Heart left ventricle (tissue), 16 donors: ENCODE measurements at regions of chr5 and their contacts with region 1.

Region 1: GRCh38 chr5:123671042-123671441 is 159.1 kb downstream of the CSNK1G3 start:
- DNase-seq: peak in 4 of 5 donors; percentile 28 to 37 (median 31)
- ATAC-seq: peak in 1 of 4 donors; percentile 25
- H3K4me3 ChIP-seq: no peak overlapping the region
- H3K27ac ChIP-seq: no peak overlapping the region
- H3K4me1 ChIP-seq: peaks cover 0 to 26% (median 11%) of the 10 kb centered on the region in 12 donors
- H3K27me3 ChIP-seq: no peaks in the 10 kb centered on the region
- CTCF ChIP-seq: peak; percentile 73 to 93 (median 83)
- POLR2A ChIP-seq: no peak

Region 2: GRCh38 chr5:123628860-123629556 is 42.0 kb before region 1 on chr5:
- intact Hi-C with region 1: no loop called
- DNase-seq: peak in 1 of 5 donors; percentile 34
- ATAC-seq: peak in 1 of 4 donors; percentile 46
- H3K4me3 ChIP-seq: no peak overlapping the region
- H3K27ac ChIP-seq: no peak overlapping the region
- H3K4me1 ChIP-seq: no peaks in the 10 kb centered on the region
- H3K27me3 ChIP-seq: no peaks in the 10 kb centered on the region
- CTCF ChIP-seq: no peak
- POLR2A ChIP-seq: no peak

Region 3: DNA sequence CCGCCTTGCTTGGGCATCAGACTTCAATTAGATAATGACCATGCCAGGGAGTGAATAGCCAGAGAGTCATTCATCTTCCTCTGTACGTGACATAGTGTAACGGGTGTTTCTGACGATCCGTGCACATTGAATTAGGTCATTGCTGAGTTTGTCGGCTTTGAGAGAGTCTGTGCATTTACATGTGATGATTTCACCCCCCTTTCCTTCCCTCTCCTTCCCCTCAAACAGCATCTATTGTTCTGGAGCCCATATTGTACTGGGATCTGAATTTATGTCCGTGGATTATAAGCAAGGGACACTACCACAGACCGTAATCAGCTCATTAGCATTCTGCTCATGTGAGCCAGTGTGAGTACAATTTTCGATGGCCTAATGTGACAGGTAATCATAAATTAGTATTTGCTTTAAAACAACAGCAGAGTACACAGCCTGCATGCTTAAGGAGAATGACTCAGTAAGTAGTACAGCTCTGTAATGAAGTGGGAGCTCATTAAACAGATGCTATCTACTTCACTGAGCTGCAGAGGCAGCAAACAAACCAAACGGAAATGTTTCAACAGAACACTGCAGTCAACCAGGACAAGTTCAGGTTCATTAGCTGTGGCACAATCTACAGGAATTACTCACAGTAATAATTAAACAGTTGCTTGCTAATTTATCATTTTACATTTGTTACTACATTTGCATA is 143.0 kb after region 1 on chr5:
- intact Hi-C with region 1: loop called in 2 of 10 experiments (anchors 5 to 10 kb)
- DNase-seq: no peak
- ATAC-seq: peak; percentile 45 to 65 (median 52)
- H3K4me3 ChIP-seq: peak overlapping the region in 1 of 12 donors; percentile 4
- H3K27ac ChIP-seq: peak overlapping the region in 11 of 12 donors; percentile 11 to 74 (median 33)
- H3K4me1 ChIP-seq: peaks cover 9 to 44% (median 30%) of the 10 kb centered on the region in 12 donors
- H3K27me3 ChIP-seq: no peaks in the 10 kb centered on the region
- CTCF ChIP-seq: no peak
- POLR2A ChIP-seq: no peak

Region 4: DNA sequence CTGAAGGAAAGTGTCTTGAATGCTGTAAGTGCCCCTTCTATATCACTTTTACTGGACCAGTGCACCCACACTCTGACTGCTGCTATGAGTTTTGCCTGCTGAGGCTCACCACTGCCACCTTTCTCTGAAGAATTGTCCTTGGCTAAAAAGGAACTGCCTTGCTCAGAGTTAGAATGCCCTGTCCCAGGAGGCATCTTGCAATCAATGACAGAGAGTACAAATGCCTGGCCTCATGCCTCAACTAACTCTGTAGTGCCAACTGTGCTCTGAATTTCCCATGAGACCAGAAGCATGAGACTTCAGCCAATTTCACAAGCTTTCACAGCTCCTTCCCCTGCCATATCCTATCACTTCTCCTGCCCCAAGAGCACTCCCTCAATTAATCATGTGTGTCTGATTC is 505.6 kb after region 1 on chr5:
- intact Hi-C with region 1: loop called in 2 of 10 experiments (anchors 5 kb)
- DNase-seq: peak in 4 of 5 donors; percentile 14 to 45 (median 42)
- ATAC-seq: peak; percentile 89 to 98 (median 94)
- H3K4me3 ChIP-seq: no peak overlapping the region
- H3K27ac ChIP-seq: no peak overlapping the region
- H3K4me1 ChIP-seq: peaks cover 0 to 6% (median 0%) of the 10 kb centered on the region in 12 donors
- H3K27me3 ChIP-seq: no peaks in the 10 kb centered on the region
- CTCF ChIP-seq: peak in 9 of 12 donors; percentile 6 to 49 (median 21)
- POLR2A ChIP-seq: no peak

Region 5: GRCh38 chr5:124536333-124536732 is 865.3 kb after region 1 on chr5:
- intact Hi-C with region 1: loop called in 1 of 10 experiments (anchors 10 kb)
- DNase-seq: no peak
- ATAC-seq: peak; percentile 32 to 70 (median 66)
- H3K4me3 ChIP-seq: no peak overlapping the region
- H3K27ac ChIP-seq: peak overlapping the region in 7 of 12 donors; percentile 2 to 60 (median 17)
- H3K4me1 ChIP-seq: peaks cover 0 to 29% (median 15%) of the 10 kb centered on the region in 12 donors
- H3K27me3 ChIP-seq: no peaks in the 10 kb centered on the region
- CTCF ChIP-seq: no peak
- POLR2A ChIP-seq: no peak